Activated CD8-positive, alpha-beta T cell treated with anti-CD3 and anti-CD28 coated beads for 36 hours (primary cell): ENCODE measurements at regions of chr17 and their contacts with region 1.

Region 1: GRCh38 chr17:2416010-2416734 is 15.3 kb upstream of the MNT start:
- DNase-seq: peak; percentile 91
- ATAC-seq: peak; percentile 89
- H3K4me3 Mint-ChIP-seq: no peak overlapping the region
- H3K27ac Mint-ChIP-seq: peak overlapping the region; percentile 59
- H3K4me1 Mint-ChIP-seq: peaks cover 3% of the 10 kb centered on the region
- H3K27me3 Mint-ChIP-seq: no peaks in the 10 kb centered on the region
- CTCF ChIP-seq: peak; percentile 99

Region 2: DNA sequence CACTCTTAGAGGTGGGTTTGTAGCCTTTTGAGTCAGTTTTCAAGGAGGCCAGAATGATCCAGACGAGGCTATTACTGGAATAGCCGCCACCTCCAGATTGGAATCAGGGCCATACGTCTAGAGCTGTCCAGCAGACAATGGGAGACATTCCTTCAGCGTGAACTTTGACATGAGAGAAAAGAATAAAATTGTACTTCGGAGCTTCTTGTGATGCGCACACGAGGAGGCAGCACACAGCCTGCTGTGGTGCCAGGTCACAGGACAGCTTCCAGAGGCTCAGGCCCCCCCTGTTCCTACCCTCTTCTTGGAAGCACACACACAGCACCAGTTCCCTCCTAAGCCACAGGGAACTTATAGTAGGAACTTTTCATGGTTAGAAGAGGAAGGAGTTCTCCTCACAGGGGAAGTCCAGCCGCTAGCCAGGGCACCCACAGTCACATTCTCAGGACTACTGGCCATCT is 1782.5 kb before region 1 on chr17:
- CTCF ChIA-PET with region 1: no interaction called
- POLR2A ChIA-PET with region 1: no interaction called
- intact Hi-C with region 1: no loop called
- DNase-seq: no peak
- ATAC-seq: no peak
- H3K4me3 Mint-ChIP-seq: no peak overlapping the region
- H3K27ac Mint-ChIP-seq: no peak overlapping the region
- H3K4me1 Mint-ChIP-seq: no peaks in the 10 kb centered on the region
- H3K27me3 Mint-ChIP-seq: no peaks in the 10 kb centered on the region
- CTCF ChIP-seq: no peak

Region 3: GRCh38 chr17:2354311-2354710 is 61.9 kb before region 1 on chr17:
- CTCF ChIA-PET with region 1: interaction called, 10 read pairs
- POLR2A ChIA-PET with region 1: no interaction called
- intact Hi-C with region 1: no loop called
- DNase-seq: no peak
- ATAC-seq: no peak
- H3K4me3 Mint-ChIP-seq: no peak overlapping the region
- H3K27ac Mint-ChIP-seq: peak overlapping the region; percentile 28
- H3K4me1 Mint-ChIP-seq: peaks cover 16% of the 10 kb centered on the region
- H3K27me3 Mint-ChIP-seq: no peaks in the 10 kb centered on the region
- CTCF ChIP-seq: no peak

Region 4: DNA sequence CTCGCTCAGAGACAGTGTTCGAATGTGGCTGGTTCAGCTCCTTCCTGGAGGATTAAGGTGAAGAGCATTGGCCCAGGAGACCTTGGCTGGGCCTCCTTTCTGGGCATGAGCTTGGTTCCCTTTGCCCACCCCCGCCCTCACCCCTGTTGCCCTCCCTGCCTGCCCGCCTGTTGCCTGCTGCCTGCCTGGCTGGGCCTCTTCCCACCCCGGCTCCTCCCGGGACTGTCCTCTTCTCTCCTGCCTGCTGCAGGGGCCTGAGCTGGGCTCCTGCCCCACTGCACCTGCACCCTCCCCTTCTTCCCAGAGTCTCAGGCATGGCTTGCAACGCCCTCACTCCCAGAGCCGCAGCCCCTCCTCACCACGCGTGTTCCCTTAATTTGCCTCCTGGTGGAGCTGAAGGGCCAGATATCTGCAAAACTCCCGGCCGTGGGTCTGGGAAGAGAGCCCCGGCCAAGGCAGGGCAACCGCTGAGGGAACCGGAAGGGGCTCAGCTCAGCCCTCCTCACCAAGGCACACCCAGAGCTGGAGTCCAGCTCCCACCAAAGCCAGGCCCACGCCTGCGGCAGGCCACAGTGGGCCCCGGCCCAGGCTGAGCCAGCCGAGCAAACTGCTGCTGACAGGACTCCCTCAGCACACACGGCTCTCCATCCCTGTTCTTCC is 46.5 kb before region 1 on chr17:
- CTCF ChIA-PET with region 1: interaction called, 13 read pairs
- POLR2A ChIA-PET with region 1: interaction called, 3 read pairs
- intact Hi-C with region 1: no loop called
- DNase-seq: no peak
- ATAC-seq: no peak
- H3K4me3 Mint-ChIP-seq: no peak overlapping the region
- H3K27ac Mint-ChIP-seq: no peak overlapping the region
- H3K4me1 Mint-ChIP-seq: no peaks in the 10 kb centered on the region
- H3K27me3 Mint-ChIP-seq: no peaks in the 10 kb centered on the region
- CTCF ChIP-seq: no peak

Region 5: DNA sequence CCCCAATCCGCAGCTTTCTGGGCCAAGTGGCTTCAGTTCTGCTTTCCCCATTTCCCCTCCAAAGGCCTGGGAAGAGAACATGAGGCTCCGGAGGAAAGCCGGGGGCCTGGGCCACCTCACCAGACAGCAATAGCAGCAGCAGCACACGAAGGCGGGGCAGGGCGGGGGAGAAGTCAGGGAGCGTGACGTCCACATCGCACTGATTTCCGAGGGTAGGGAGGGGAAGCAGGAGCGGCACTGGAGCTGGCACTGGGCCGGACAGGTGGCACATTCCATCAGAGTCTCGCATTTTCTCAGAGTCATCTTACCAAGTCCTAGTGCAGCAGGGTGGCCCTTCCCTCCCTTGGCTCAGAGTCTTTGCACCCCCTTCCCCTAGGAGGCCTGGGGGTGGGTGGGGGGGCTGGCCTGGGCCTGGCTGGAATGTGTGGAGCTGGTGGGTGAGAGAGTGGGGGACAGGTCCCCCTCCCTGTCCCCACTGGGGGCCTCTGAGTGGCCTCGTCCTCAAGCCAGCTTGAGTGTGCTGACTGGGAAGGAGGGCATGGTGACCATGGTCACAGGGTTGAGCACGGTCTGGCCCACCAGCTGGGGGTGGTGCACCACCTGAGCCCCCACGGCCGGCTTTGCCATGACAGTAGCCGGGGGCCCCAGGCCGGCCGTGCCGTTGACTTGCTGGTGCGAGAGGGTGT is 29.6 kb before region 1 on chr17:
- CTCF ChIA-PET with region 1: interaction called, 463 read pairs
- POLR2A ChIA-PET with region 1: interaction called, 21 read pairs
- intact Hi-C with region 1: loop called (anchors 2 kb)
- DNase-seq: no peak
- ATAC-seq: no peak
- H3K4me3 Mint-ChIP-seq: no peak overlapping the region
- H3K27ac Mint-ChIP-seq: no peak overlapping the region
- H3K4me1 Mint-ChIP-seq: peaks cover 22% of the 10 kb centered on the region
- H3K27me3 Mint-ChIP-seq: no peaks in the 10 kb centered on the region
- CTCF ChIP-seq: no peak

Region 6: GRCh38 chr17:2401426-2402221 is 14.5 kb before region 1 on chr17:
- CTCF ChIA-PET with region 1: interaction called, 71 read pairs
- POLR2A ChIA-PET with region 1: interaction called, 5 read pairs
- intact Hi-C with region 1: no loop called
- DNase-seq: peak; percentile 100
- ATAC-seq: peak; percentile 64
- H3K4me3 Mint-ChIP-seq: peak overlapping the region; percentile 97
- H3K27ac Mint-ChIP-seq: peak overlapping the region; percentile 94
- H3K4me1 Mint-ChIP-seq: peaks cover 41% of the 10 kb centered on the region
- H3K27me3 Mint-ChIP-seq: no peaks in the 10 kb centered on the region
- CTCF ChIP-seq: no peak

Region 7: DNA sequence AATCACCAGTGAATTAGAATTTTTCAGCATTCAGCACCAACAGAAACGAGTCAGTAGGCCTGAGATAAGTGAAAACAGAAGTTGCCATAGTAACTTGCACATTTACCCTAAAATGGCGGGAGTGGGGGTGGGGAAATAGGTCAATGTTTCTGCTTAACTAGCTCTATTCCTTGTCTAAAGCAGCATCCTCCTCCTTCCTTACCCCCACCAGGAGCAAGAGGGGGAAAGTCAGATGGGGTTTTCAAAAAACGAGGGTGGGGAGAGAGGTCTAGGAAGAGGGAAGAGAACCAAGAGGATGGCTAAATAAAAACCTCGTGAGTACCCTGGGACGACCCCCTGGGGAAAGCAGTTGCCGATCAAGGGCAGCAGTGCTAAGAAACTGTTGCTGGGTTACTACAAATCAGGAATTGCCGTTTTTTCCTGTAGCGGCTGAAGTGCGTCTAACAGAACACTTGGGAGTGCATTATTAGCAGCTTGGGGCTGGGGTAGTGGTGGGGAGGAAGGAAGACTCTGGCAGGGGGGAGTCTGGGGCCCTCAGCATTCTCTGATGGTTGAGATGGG is 19.1 kb after region 1 on chr17:
- CTCF ChIA-PET with region 1: interaction called, 16 read pairs
- POLR2A ChIA-PET with region 1: no interaction called
- intact Hi-C with region 1: no loop called
- DNase-seq: no peak
- ATAC-seq: no peak
- H3K4me3 Mint-ChIP-seq: no peak overlapping the region
- H3K27ac Mint-ChIP-seq: no peak overlapping the region
- H3K4me1 Mint-ChIP-seq: peaks cover 6% of the 10 kb centered on the region
- H3K27me3 Mint-ChIP-seq: no peaks in the 10 kb centered on the region
- CTCF ChIP-seq: no peak